ENCODE measurements at regions of chr10 and their contacts with region 1.

Region 1: DNA sequence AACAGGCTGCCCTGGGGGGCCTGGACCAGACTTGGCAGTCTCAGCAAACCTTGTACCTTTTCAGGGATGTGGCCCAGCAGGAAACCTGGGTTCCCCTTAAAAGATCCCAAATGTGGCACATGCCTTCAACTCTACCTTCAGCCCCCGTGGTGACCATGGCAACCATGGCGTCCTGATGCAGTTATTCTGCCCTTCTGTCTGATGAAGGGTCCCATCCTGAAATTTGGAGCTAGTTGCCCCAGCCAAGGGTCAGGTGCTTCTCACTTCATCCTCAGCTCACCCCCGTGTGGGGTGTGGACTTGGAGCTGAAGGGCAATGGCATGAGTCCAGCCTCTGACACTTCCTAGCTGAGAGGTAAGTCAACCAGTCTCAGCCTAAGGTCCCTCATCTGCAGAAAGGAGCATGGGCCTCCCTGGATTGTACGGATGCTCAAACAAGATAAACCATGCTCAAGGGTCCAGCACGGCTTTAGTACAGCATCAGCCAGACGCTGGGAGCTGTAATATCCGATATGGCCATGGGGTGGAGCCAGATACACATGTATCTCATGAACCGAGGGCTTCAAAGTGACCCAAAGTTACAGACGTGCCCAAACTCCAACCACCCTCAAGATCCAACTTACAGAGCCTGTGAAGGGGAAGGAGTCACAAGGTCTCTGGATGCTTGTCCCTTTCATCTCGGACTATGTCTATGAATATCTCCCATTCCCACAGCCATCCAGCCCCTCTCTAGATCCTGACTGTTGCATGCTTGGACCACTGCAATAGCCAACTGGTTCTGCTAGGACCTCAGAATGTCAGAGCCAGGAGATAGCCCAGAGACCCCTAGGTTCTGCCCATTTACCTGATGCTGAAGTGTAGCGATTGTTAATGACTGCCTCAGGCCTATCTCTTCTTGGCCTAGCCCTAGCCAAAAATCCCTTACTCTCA is 142.5 kb downstream of the SH3PXD2A start:
- DNase-seq: peak; percentile 89
- H3K4me3 Mint-ChIP-seq: no peak overlapping the region
- H3K27ac Mint-ChIP-seq: peak overlapping the region; percentile 4
- H3K4me1 Mint-ChIP-seq: peaks cover 2% of the 10 kb centered on the region
- H3K27me3 Mint-ChIP-seq: no peaks in the 10 kb centered on the region

Region 2: GRCh38 chr10:103745341-103746227 is 32.8 kb after region 1 on chr10:
- CTCF ChIA-PET with region 1: interaction called, 14 read pairs
- POLR2A ChIA-PET with region 1: no interaction called
- intact Hi-C with region 1: no loop called
- DNase-seq: peak; percentile 90
- H3K4me3 Mint-ChIP-seq: peak overlapping the region; percentile 27
- H3K27ac Mint-ChIP-seq: peak overlapping the region; percentile 86
- H3K4me1 Mint-ChIP-seq: peaks cover 43% of the 10 kb centered on the region
- H3K27me3 Mint-ChIP-seq: no peaks in the 10 kb centered on the region

Region 3: GRCh38 chr10:103800789-103801540 is 88.1 kb after region 1 on chr10:
- CTCF ChIA-PET with region 1: interaction called, 4 read pairs
- POLR2A ChIA-PET with region 1: no interaction called
- intact Hi-C with region 1: loop called (anchors 10 kb)
- DNase-seq: peak; percentile 76
- H3K4me3 Mint-ChIP-seq: no peak overlapping the region
- H3K27ac Mint-ChIP-seq: peak overlapping the region; percentile 35
- H3K4me1 Mint-ChIP-seq: peaks cover 21% of the 10 kb centered on the region
- H3K27me3 Mint-ChIP-seq: no peaks in the 10 kb centered on the region

Region 4: GRCh38 chr10:103839872-103840746 is 127.3 kb after region 1 on chr10:
- CTCF ChIA-PET with region 1: no interaction called
- POLR2A ChIA-PET with region 1: no interaction called
- intact Hi-C with region 1: no loop called
- DNase-seq: no peak
- H3K4me3 Mint-ChIP-seq: no peak overlapping the region
- H3K27ac Mint-ChIP-seq: no peak overlapping the region
- H3K4me1 Mint-ChIP-seq: peaks cover 2% of the 10 kb centered on the region
- H3K27me3 Mint-ChIP-seq: no peaks in the 10 kb centered on the region

Region 5: DNA sequence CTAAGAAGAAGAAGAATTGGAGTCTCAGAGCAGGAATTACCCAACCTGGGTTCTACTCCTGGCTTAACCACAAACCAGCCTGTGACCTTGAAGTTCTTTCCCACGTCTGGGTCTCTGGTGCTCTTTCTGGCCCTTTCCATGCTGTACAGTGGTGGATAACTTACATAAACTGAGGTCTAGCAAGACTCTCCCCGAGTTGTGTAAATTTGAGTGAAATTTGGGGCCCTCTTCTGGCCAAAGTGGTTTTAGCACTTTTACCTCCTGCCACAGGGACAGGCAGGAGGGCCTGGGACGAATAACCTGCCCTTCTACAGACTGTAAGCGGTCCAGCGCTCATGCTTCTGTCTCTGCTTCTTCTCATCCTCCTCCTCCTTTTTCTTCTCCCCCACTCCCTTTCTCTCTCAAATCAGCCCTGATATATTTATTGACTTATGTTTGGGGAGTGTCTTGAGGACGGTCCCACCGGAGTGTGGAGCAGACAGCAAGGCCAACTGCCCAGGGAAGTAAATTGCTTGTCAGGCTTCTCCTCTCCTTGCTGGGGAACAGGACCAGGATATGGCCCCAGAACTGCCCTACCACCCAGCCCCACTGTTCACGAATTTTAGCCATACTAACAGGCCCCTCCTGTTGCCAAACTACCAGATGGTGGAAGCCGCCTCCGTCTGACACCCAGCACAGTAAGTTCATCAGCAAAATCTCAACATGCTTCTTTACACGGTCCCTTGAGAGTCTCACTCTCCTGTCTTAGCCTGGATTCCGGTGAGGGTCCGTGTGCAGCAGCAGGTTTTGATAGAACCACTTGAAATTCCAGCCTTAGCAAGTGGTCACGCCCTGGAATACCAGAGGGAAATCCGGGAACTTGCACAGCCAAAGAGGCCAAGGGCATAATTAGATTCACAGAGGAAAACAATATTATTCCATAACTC is 146.6 kb after region 1 on chr10:
- CTCF ChIA-PET with region 1: interaction called, 161 read pairs
- POLR2A ChIA-PET with region 1: interaction called, 3 read pairs
- intact Hi-C with region 1: loop called (anchors 1 kb)
- DNase-seq: peak; percentile 74
- H3K4me3 Mint-ChIP-seq: no peak overlapping the region
- H3K27ac Mint-ChIP-seq: no peak overlapping the region
- H3K4me1 Mint-ChIP-seq: peaks cover 10% of the 10 kb centered on the region
- H3K27me3 Mint-ChIP-seq: peaks cover 15% of the 10 kb centered on the region